Endothelial cell of umbilical vein (primary cell): ENCODE measurements at regions of chr13 and their contacts with region 1.

Region 1: GRCh38 chr13:48412881-48413351 is at the start of gene LPAR6:
- DNase-seq: peak; percentile 88
- H3K4me3 ChIP-seq: peak within 1 kb of the TSS; percentile 74 to 99 (median 76)
- H3K27ac ChIP-seq: peak within 1 kb of the TSS; percentile 95
- H3K4me1 ChIP-seq: peaks cover 17% of the 10 kb centered on the region
- H3K27me3 ChIP-seq: no peaks in the 10 kb centered on the region
- CTCF ChIP-seq: no peak
- POLR2A ChIP-seq: peak; percentile 73
- total RNA-seq, gene LPAR6: 22.3 and 22.9 TPM in 2 replicates

Region 2: GRCh38 chr13:48126944-48127830 is 285.7 kb before region 1 on chr13:
- CTCF ChIA-PET with region 1: no interaction called
- POLR2A ChIA-PET with region 1: no interaction called
- dilution Hi-C with region 1: no loop called
- intact Hi-C with region 1: loop called (anchors 5 kb)
- DNase-seq: peak; percentile 66
- H3K4me3 ChIP-seq: no peak overlapping the region
- H3K27ac ChIP-seq: no peak overlapping the region
- H3K4me1 ChIP-seq: peaks cover 15% of the 10 kb centered on the region
- H3K27me3 ChIP-seq: peaks cover 0 to under 1% of the 10 kb centered on the region in 2 experiments
- CTCF ChIP-seq: peak; percentile 58 to 62
- POLR2A ChIP-seq: no peak

Region 3: DNA sequence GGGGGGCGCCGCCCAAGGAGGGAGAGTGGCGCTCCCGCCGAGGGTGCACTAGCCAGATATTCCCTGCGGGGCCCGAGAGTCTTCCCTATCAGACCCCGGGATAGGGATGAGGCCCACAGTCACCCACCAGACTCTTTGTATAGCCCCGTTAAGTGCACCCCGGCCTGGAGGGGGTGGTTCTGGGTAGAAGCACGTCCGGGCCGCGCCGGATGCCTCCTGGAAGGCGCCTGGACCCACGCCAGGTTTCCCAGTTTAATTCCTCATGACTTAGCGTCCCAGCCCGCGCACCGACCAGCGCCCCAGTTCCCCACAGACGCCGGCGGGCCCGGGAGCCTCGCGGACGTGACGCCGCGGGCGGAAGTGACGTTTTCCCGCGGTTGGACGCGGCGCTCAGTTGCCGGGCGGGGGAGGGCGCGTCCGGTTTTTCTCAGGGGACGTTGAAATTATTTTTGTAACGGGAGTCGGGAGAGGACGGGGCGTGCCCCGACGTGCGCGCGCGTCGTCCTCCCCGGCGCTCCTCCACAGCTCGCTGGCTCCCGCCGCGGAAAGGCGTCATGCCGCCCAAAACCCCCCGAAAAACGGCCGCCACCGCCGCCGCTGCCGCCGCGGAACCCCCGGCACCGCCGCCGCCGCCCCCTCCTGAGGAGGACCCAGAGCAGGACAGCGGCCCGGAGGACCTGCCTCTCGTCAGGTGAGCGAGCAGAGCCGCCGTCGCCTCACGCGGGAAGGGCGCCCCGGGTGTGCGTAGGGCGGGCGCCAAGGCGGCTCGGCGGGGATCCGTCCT is 109.4 kb before region 1 on chr13 and contains the start of gene RB1:
- CTCF ChIA-PET with region 1: no interaction called
- POLR2A ChIA-PET with region 1: no interaction called
- dilution Hi-C with region 1: no loop called
- intact Hi-C with region 1: loop called (anchors 5 kb)
- DNase-seq: peak; percentile 92
- H3K4me3 ChIP-seq: peak within 1 kb of the TSS; percentile 94 to 98 (median 97)
- H3K27ac ChIP-seq: peak within 1 kb of the TSS; percentile 94
- H3K4me1 ChIP-seq: peaks cover 21% of the 10 kb centered on the region
- H3K27me3 ChIP-seq: no peaks in the 10 kb centered on the region
- CTCF ChIP-seq: no peak
- POLR2A ChIP-seq: no peak
- total RNA-seq, gene RB1: 34.8 and 41.2 TPM in 2 replicates

Region 4: GRCh38 chr13:48431987-48432615 is 19.2 kb after region 1 on chr13:
- CTCF ChIA-PET with region 1: interaction called, 3 read pairs
- POLR2A ChIA-PET with region 1: interaction called, 3 read pairs
- dilution Hi-C with region 1: no loop called
- intact Hi-C with region 1: loop called (anchors 2 kb)
- DNase-seq: peak; percentile 70
- H3K4me3 ChIP-seq: no peak overlapping the region
- H3K27ac ChIP-seq: peak overlapping the region; percentile 29
- H3K4me1 ChIP-seq: peaks cover 36% of the 10 kb centered on the region
- H3K27me3 ChIP-seq: no peaks in the 10 kb centered on the region
- CTCF ChIP-seq: no peak
- POLR2A ChIP-seq: no peak

Region 5: GRCh38 chr13:48493851-48494250 is 80.9 kb after region 1 on chr13:
- CTCF ChIA-PET with region 1: no interaction called
- POLR2A ChIA-PET with region 1: no interaction called
- dilution Hi-C with region 1: no loop called
- intact Hi-C with region 1: loop called (anchors 2 kb)
- DNase-seq: peak; percentile 47
- H3K4me3 ChIP-seq: no peak overlapping the region
- H3K27ac ChIP-seq: peak overlapping the region; percentile 12
- H3K4me1 ChIP-seq: peaks cover 50% of the 10 kb centered on the region
- H3K27me3 ChIP-seq: no peaks in the 10 kb centered on the region
- CTCF ChIP-seq: no peak
- POLR2A ChIP-seq: no peak

Region 6: GRCh38 chr13:48892053-48892690 is 479.3 kb after region 1 on chr13:
- CTCF ChIA-PET with region 1: no interaction called
- POLR2A ChIA-PET with region 1: interaction called, 11 read pairs
- dilution Hi-C with region 1: no loop called
- intact Hi-C with region 1: no loop called
- DNase-seq: peak; percentile 91
- H3K4me3 ChIP-seq: no peak overlapping the region
- H3K27ac ChIP-seq: peak overlapping the region; percentile 74
- H3K4me1 ChIP-seq: peaks cover 27% of the 10 kb centered on the region
- H3K27me3 ChIP-seq: no peaks in the 10 kb centered on the region
- CTCF ChIP-seq: no peak
- POLR2A ChIP-seq: no peak